Endothelial cell of umbilical vein (primary cell): ENCODE measurements at regions of chr1 and their contacts with region 1.

Region 1: GRCh38 chr1:187928288-187928687 is 1099.5 kb downstream of the PLA2G4A start:
- DNase-seq: peak; percentile 78
- H3K4me3 ChIP-seq: no peak overlapping the region
- H3K27ac ChIP-seq: no peak overlapping the region
- H3K4me1 ChIP-seq: peaks cover 6% of the 10 kb centered on the region
- H3K27me3 ChIP-seq: no peaks in the 10 kb centered on the region
- CTCF ChIP-seq: peak; percentile 52 to 58
- POLR2A ChIP-seq: no peak

Region 2: DNA sequence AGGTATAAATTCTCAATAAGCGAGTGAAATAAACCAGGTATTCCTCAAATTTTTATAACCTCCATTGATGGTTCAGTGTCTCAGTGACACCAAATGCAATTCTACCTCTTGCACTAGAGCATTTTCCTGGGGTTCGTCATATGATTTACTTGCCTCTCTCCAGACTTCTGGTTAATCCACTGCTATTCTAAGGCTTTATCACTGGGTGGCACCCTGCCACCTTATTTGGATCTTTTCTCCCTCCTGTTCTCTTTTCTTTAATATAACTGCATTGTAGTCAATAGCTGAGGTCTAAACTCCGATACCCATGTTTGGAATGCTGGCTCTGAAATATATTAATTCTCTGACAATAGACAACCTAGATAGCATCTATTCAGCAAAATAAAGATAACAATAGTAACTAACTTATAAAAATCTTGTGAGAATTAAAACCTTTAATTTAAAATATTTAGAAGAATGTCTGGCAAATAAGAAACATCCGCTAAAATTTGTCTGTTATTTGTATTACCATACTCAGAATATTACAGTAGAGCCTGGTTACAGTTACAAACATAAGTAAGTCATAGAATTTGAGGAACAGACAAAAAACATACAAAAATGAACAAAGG is 663.2 kb before region 1 on chr1:
- CTCF ChIA-PET with region 1: interaction called, 19 read pairs
- POLR2A ChIA-PET with region 1: no interaction called
- dilution Hi-C with region 1: no loop called
- intact Hi-C with region 1: loop called (anchors 5 kb)
- DNase-seq: peak; percentile 70
- H3K4me3 ChIP-seq: no peak overlapping the region
- H3K27ac ChIP-seq: no peak overlapping the region
- H3K4me1 ChIP-seq: no peaks in the 10 kb centered on the region
- H3K27me3 ChIP-seq: peaks cover 0 to 4% of the 10 kb centered on the region in 2 experiments
- CTCF ChIP-seq: peak; percentile 29 to 49
- POLR2A ChIP-seq: no peak

Region 3: DNA sequence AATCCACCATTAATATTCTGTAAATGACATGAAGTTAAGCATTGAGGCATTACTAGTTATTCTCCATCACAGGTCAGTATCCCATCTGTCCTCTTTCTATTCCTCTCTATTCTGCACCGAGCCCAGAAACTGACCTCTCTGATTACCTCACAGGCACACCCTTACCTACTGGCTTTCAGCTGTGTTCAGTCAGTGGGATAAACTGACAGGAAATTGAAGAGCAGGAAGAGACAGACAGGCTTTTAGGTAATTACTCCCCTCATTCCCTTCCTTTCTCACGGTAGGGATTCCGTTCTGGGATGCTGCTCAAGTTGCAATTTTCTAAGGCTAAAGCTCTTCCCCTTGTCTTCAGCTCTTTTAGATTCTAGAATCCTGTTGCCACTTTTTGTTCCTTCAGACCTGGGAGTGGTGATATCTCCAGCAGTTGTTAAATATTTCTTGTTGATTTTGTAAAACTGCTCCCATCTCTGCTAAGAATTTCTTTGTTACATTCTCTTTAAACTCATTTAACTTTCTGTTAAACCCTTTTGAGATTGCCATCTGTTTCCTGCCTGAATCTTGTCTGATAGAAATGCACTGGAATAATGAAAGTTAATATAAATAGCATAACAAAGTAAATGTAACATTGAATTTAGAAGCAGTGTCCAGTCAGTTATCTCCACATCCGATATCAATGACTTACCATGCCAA is 36.1 kb before region 1 on chr1:
- CTCF ChIA-PET with region 1: no interaction called
- POLR2A ChIA-PET with region 1: no interaction called
- dilution Hi-C with region 1: no loop called
- intact Hi-C with region 1: no loop called
- DNase-seq: peak; percentile 58
- H3K4me3 ChIP-seq: no peak overlapping the region
- H3K27ac ChIP-seq: no peak overlapping the region
- H3K4me1 ChIP-seq: no peaks in the 10 kb centered on the region
- H3K27me3 ChIP-seq: no peaks in the 10 kb centered on the region
- CTCF ChIP-seq: no peak
- POLR2A ChIP-seq: no peak

Region 4: GRCh38 chr1:188043536-188044245 is 115.4 kb after region 1 on chr1:
- CTCF ChIA-PET with region 1: interaction called, 13 read pairs
- POLR2A ChIA-PET with region 1: no interaction called
- dilution Hi-C with region 1: no loop called
- intact Hi-C with region 1: loop called (anchors 1 kb)
- DNase-seq: peak; percentile 92
- H3K4me3 ChIP-seq: peak overlapping the region in 1 of 3 experiments; percentile 26
- H3K27ac ChIP-seq: peak overlapping the region; percentile 94
- H3K4me1 ChIP-seq: peaks cover 33% of the 10 kb centered on the region
- H3K27me3 ChIP-seq: no peaks in the 10 kb centered on the region
- CTCF ChIP-seq: no peak
- POLR2A ChIP-seq: no peak

Region 5: DNA sequence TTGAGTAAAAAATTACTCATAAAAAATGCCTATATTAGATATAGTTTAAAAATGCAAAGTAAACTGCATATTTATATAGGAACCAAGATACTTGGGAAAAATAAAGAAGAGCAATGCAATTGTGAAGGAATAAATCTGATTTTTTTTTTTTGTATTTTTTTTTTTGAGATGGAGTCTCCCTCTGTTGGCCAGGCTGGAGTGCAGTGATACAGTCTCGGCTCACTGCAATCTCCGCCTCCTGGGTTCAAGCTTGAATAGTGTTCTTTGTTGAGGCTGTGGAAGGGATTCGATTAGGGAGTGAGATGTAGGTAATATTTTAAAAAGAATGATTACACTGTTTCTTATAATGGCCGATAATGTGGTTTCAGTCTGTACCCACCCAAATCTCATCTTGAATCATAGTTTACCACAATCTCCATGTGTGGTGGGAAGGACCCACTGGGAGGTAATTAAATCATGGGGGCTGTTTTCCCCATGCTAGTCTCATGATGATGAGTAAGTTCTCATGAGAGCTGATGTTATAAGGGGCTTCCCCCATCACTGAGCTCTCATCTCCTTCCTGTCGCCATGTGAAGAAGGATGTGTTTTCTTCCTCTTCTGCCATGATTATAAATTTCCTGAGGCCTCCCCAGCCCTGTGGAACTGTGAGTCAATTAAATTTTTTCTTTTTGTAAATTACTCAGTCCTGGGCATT is 666.4 kb after region 1 on chr1:
- CTCF ChIA-PET with region 1: interaction called, 3 read pairs
- POLR2A ChIA-PET with region 1: no interaction called
- dilution Hi-C with region 1: no loop called
- intact Hi-C with region 1: loop called (anchors 5 kb)
- DNase-seq: no peak
- H3K4me3 ChIP-seq: no peak overlapping the region
- H3K27ac ChIP-seq: no peak overlapping the region
- H3K4me1 ChIP-seq: no peaks in the 10 kb centered on the region
- H3K27me3 ChIP-seq: no peaks in the 10 kb centered on the region
- CTCF ChIP-seq: no peak
- POLR2A ChIP-seq: no peak

Region 6: GRCh38 chr1:188782219-188782841 is 854.0 kb after region 1 on chr1:
- CTCF ChIA-PET with region 1: interaction called, 11 read pairs
- POLR2A ChIA-PET with region 1: no interaction called
- dilution Hi-C with region 1: no loop called
- intact Hi-C with region 1: loop called (anchors 2 kb)
- DNase-seq: peak; percentile 31
- H3K4me3 ChIP-seq: no peak overlapping the region
- H3K27ac ChIP-seq: no peak overlapping the region
- H3K4me1 ChIP-seq: no peaks in the 10 kb centered on the region
- H3K27me3 ChIP-seq: no peaks in the 10 kb centered on the region
- CTCF ChIP-seq: peak; percentile 39 to 44
- POLR2A ChIP-seq: no peak